ENCODE measurements at regions of chr17 and their contacts with region 1.

Region 1: DNA sequence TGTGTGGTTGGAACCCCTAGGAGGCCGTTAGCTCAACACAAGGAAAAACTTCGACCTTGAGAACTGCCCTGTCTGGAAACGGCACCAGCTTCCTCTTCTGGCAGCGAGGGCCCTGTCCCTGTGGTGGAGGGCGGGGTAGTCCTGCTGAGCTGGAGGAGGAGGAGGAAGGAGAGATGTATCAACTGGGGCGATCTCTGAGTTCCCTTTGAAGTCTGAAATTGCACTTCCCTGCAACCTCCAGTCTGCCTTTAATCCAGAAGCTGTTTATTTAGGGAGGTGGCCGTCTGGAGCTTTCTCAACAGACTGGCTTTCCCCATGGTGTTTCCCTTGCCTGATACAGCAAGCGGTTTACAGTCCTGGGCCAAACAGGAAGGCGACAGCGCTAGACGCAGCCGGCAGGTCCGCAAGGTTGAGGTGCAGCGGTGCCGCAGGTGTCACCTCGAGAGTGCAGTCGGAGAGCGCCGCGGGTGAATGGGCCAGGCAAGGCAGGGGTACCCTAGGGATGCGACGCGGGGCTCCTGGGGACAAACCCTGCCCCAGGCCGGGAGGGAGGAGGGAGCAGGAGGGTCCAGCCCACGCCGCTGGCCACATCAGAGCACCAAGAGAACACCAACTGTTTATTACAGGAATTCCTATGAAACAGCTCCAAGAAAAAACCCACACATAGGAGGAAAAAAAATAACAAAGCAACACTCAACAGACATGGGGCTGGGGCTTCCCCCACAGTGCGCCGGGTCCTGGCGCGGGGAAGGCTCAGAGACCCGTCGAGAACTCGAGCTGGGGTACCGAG is 11.4 kb upstream of the MRPS23 start:
- DNase-seq: peak in 5 of 9 donors; percentile 21 to 36 (median 27)
- ATAC-seq: peak; percentile 83
- H3K4me3 ChIP-seq: peak overlapping the region; percentile 60
- H3K4me3 Mint-ChIP-seq: peak overlapping the region; percentile 83 to 89 (median 86)
- H3K27ac ChIP-seq: no peak overlapping the region
- H3K27ac Mint-ChIP-seq: no peak overlapping the region
- H3K4me1 ChIP-seq: peaks cover 0 to 7% of the 10 kb centered on the region in 2 donors
- H3K4me1 Mint-ChIP-seq: peaks cover 9 to 16% (median 13%) of the 10 kb centered on the region in 7 donors
- H3K27me3 ChIP-seq: peaks cover 0 to 4% of the 10 kb centered on the region in 2 donors
- H3K27me3 Mint-ChIP-seq: peaks cover 0 to 45% (median 12%) of the 10 kb centered on the region in 5 donors

Region 2: GRCh38 chr17:57747221-57748017 is 113.8 kb before region 1 on chr17:
- CTCF ChIA-PET with region 1: no interaction called
- POLR2A ChIA-PET with region 1: no interaction called
- intact Hi-C with region 1: no loop called
- DNase-seq: peak in 8 of 9 donors; percentile 18 to 65 (median 50)
- ATAC-seq: peak; percentile 66
- H3K4me3 ChIP-seq: no peak overlapping the region
- H3K4me3 Mint-ChIP-seq: no peak overlapping the region
- H3K27ac ChIP-seq: no peak overlapping the region
- H3K27ac Mint-ChIP-seq: peak overlapping the region in 1 of 9 donors; percentile 2
- H3K4me1 ChIP-seq: no peaks in the 10 kb centered on the region
- H3K4me1 Mint-ChIP-seq: peaks cover 0 to 6% (median 0%) of the 10 kb centered on the region in 7 donors
- H3K27me3 ChIP-seq: no peaks in the 10 kb centered on the region
- H3K27me3 Mint-ChIP-seq: peaks cover 0 to 15% (median 4%) of the 10 kb centered on the region in 5 donors

Region 3: GRCh38 chr17:57892146-57892828 is 31.1 kb after region 1 on chr17:
- CTCF ChIA-PET with region 1: no interaction called
- POLR2A ChIA-PET with region 1: no interaction called
- intact Hi-C with region 1: loop called in 1 of 2 experiments (anchors 1 kb)
- DNase-seq: peak; percentile 44 to 81 (median 65)
- ATAC-seq: peak; percentile 87
- H3K4me3 ChIP-seq: no peak overlapping the region
- H3K4me3 Mint-ChIP-seq: no peak overlapping the region
- H3K27ac ChIP-seq: no peak overlapping the region
- H3K27ac Mint-ChIP-seq: no peak overlapping the region
- H3K4me1 ChIP-seq: no peaks in the 10 kb centered on the region
- H3K4me1 Mint-ChIP-seq: peaks cover 0 to 9% (median 4%) of the 10 kb centered on the region in 7 donors
- H3K27me3 ChIP-seq: no peaks in the 10 kb centered on the region
- H3K27me3 Mint-ChIP-seq: peaks cover 0 to 12% (median 0%) of the 10 kb centered on the region in 5 donors

Measured in naive thymus-derived CD4-positive, alpha-beta T cell (primary cell).